PC-9 (cell line): ENCODE measurements at regions of chr14 and their contacts with region 1.

Region 1: DNA sequence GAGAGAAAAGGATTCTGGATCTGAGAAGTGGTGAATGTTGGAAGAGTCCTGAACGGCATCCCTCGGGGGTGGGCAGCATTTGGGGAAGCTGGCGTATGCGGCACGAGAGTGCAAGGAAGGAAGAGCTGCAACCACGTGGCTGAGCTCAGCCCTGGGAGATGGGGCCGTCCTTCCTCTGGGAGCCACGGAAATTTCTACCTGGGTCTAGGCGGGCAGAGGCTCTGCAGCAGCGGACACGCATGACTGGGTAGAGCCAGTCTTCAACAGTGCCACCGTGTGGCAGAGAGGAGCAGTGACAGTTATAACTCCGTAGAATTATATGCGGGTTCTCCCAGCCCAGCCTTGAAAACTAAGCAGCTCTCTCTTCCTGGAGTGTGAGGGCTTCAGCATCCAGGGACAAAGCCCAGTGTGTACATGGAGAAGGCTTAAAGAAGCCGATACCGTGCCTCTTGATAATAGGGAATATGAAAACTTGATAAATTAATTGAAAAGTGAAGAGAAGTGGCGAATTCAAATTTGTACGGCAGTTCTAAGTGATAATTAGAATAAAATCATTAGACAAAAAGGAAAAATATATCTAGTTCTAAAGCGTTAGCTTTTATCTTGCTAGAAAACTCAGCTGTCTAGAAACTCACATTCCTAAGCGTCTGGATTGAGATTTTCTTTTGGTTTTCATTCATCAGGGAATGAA is 82.9 kb upstream of the STXBP6 start:
- DNase-seq: peak in 1 of 2 experiments; percentile 49
- H3K4me3 ChIP-seq: no peak overlapping the region
- H3K27ac ChIP-seq: no peak overlapping the region
- H3K4me1 ChIP-seq: no peaks in the 10 kb centered on the region
- H3K27me3 ChIP-seq: no peaks in the 10 kb centered on the region
- CTCF ChIP-seq: peak; percentile 75

Region 2: GRCh38 chr14:24965934-24966578 is 166.8 kb before region 1 on chr14:
- CTCF ChIA-PET with region 1: no interaction called
- POLR2A ChIA-PET with region 1: no interaction called
- intact Hi-C with region 1: loop called (anchors 1 kb)
- DNase-seq: peak; percentile 40 to 67
- H3K4me3 ChIP-seq: no peak overlapping the region
- H3K27ac ChIP-seq: no peak overlapping the region
- H3K4me1 ChIP-seq: no peaks in the 10 kb centered on the region
- H3K27me3 ChIP-seq: no peaks in the 10 kb centered on the region
- CTCF ChIP-seq: no peak

Region 3: DNA sequence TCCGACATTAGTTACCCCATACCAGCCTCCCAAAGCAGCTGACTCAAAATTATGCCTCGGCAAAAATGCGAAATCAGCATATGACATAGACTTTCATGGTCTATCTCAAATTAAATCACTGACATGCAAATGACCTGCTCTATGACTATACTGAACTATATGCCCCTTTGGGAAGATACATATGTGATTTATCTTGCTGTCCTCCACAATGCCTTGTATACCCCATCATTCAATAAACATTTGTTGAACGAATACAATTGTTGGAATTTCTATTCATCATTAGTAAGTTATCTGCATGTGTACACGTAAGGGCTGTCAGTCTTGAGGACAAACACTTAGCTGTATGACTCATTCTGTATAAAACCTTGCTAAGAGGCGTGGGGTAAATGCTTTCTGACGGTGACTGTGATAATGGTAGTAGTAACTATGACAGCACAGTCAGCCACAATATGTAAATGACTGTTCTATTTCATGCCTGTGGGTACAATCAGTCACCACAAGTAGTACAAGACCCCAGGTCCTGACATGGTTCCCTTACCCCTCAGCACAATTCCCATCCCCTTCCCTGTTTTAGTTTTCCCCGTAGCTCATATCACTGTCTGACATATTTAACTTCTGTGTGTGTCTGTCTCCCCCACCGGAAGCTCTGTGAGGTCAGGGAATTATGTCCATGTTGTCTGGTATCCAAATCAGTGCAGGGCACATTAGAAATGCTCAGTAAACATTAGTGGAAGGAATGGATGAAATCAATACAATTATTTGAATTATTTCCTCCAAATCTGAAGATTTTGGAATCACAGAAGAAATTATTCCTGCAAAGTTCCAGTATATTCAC is 125.7 kb before region 1 on chr14:
- CTCF ChIA-PET with region 1: no interaction called
- POLR2A ChIA-PET with region 1: no interaction called
- intact Hi-C with region 1: loop called (anchors 5 kb)
- DNase-seq: peak; percentile 21 to 82
- H3K4me3 ChIP-seq: no peak overlapping the region
- H3K27ac ChIP-seq: no peak overlapping the region
- H3K4me1 ChIP-seq: no peaks in the 10 kb centered on the region
- H3K27me3 ChIP-seq: no peaks in the 10 kb centered on the region
- CTCF ChIP-seq: no peak

Region 4: GRCh38 chr14:25049568-25050268 is 83.2 kb before region 1 on chr14 and contains the start of gene STXBP6:
- CTCF ChIA-PET with region 1: no interaction called
- POLR2A ChIA-PET with region 1: no interaction called
- intact Hi-C with region 1: loop called (anchors 2 kb)
- DNase-seq: peak in 1 of 2 experiments; percentile 66
- H3K4me3 ChIP-seq: peak within 1 kb of the TSS; percentile 52
- H3K27ac ChIP-seq: no peak within 1 kb of the TSS
- H3K4me1 ChIP-seq: no peaks in the 10 kb centered on the region
- H3K27me3 ChIP-seq: peaks cover 33% of the 10 kb centered on the region
- CTCF ChIP-seq: no peak
- total RNA-seq, gene STXBP6: 10.0 and 12.3 TPM in 2 replicates